ENCODE measurements at regions of chr12 and their contacts with region 1.

Region 1: DNA sequence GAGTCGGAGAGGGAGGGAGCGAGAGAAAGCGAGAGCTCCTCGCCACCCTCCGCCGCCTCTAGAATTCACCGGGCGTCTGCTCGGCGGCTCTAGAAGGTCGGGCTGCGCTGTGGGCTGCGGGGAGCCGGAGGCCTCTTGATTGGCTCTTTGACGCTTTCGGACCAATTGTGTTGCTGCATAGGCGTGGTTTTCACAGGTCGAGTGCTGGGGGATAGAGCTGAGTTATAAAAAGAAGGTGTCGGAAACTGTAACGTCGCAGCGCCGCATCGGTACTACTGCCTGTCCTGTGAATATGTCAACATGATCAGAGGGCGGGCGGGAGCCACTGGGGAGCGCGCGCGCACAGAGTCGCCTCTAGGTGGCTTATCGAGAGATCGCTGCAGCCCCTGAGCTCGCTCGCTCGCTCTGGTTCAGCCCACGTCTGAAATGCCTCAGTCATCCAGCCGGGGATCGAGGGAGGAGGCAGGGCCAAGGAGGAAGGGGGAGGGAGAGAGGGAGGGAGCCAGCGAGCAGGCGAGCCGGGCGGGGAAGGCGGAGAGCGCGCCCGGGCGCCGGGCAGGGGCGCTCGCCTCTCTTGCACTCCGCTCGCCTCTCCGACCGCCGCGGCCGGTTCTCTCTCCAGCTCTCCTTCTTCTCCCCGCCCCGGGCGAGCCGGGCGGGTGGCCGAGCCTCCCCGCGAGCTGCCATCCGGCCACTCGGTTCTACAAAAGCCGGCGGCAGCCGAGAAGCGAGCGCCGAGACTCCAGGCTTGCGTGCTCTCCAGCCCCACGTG is at the start of gene TBX3:
- DNase-seq: peak; percentile 99
- H3K4me3 ChIP-seq: peak within 1 kb of the TSS; percentile 80
- CTCF ChIP-seq: peak; percentile 61

Region 2: GRCh38 chr12:114668151-114668885 is 16.0 kb before region 1 on chr12:
- CTCF ChIA-PET with region 1: interaction called, 42 read pairs
- POLR2A ChIA-PET with region 1: interaction called, 47 read pairs
- DNase-seq: no peak
- H3K4me3 ChIP-seq: peak overlapping the region; percentile 52
- CTCF ChIP-seq: peak; percentile 75

Region 3: GRCh38 chr12:114933428-114934168 is 249.3 kb after region 1 on chr12:
- CTCF ChIA-PET with region 1: no interaction called
- POLR2A ChIA-PET with region 1: interaction called, 18 read pairs
- DNase-seq: peak; percentile 38
- H3K4me3 ChIP-seq: no peak overlapping the region
- CTCF ChIP-seq: no peak

Region 4: GRCh38 chr12:115149685-115150378 is 465.5 kb after region 1 on chr12:
- CTCF ChIA-PET with region 1: no interaction called
- POLR2A ChIA-PET with region 1: interaction called, 23 read pairs
- DNase-seq: peak; percentile 81
- H3K4me3 ChIP-seq: no peak overlapping the region
- CTCF ChIP-seq: no peak

Region 5: DNA sequence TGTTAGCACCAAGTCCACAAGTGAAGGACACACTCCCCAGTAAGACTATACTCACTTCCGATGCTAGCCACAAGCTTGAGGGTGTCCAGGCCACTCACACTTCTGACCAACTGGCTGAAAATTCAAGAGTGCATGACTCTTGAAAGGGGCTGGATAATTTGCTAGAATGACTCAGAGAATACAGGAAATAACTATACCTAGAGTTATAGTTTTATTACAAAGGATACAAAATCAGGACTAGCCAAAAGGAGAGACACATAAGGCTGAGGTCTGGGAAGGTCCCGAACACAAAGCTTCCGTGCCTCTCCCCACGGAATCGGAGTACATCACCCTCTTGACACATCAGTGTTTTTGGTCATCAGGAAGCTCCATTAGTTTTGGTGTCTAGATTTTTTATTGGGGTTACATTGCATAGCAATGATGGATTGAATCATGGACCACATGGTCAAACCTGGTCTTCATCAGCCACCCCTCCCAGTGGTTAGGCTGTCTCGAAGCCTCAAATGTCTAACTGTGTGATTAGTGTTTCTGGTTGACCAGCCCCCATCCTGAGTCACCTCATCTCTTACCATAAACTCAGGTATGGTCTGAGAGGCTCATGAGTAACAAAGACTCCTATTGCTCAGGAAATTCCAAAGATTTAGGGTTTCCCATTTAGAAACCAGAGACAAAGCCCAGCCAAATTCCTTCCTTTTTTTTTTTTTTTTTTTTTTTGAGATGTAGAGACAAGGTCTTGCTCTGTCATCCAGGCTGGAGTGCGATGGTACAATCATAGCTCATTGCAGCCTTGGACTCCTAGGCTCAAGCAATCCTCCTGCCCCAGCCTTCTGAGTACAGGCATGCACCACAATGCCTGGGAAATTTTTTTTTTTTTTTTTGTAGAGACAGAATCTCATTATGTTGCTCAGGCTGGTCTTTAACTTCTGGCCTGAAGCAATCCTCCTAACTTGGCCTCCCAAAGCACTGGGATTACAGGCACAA is 471.7 kb after region 1 on chr12:
- CTCF ChIA-PET with region 1: no interaction called
- POLR2A ChIA-PET with region 1: interaction called, 25 read pairs
- DNase-seq: peak; percentile 61
- H3K4me3 ChIP-seq: no peak overlapping the region
- CTCF ChIP-seq: no peak

Region 6: DNA sequence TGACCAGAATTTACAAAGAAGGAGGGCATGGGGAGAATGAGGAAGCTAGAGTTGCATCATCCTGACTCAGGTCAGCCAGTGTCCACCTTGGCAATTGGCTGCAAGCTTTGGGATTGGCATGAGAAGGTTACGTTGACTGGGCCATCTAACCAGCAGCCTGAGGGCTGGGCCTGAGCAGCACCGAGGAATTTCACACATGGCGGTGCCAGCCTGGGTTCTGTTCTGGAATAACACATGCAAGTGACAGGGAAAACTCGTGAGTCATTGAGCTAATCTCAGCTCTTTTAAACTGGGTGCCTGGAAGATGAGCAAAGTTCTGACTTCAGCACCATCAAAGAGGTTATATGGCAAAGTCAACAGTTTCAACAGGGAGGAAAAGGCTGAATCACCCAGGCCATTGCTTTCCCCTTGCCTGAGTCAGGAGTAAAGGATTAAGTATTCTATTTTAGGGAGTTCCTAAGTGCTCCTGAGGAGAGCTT is 542.9 kb after region 1 on chr12:
- CTCF ChIA-PET with region 1: interaction called, 5 read pairs
- POLR2A ChIA-PET with region 1: interaction called, 17 read pairs
- DNase-seq: peak; percentile 77
- H3K4me3 ChIP-seq: no peak overlapping the region
- CTCF ChIP-seq: no peak

Region 7: GRCh38 chr12:115354007-115354452 is 669.7 kb after region 1 on chr12:
- CTCF ChIA-PET with region 1: no interaction called
- POLR2A ChIA-PET with region 1: interaction called, 16 read pairs
- DNase-seq: peak; percentile 88
- H3K4me3 ChIP-seq: peak overlapping the region; percentile 61
- CTCF ChIP-seq: no peak